T-cell (primary cell): ENCODE measurements at regions of chr11 and their contacts with region 1.

Region 1: DNA sequence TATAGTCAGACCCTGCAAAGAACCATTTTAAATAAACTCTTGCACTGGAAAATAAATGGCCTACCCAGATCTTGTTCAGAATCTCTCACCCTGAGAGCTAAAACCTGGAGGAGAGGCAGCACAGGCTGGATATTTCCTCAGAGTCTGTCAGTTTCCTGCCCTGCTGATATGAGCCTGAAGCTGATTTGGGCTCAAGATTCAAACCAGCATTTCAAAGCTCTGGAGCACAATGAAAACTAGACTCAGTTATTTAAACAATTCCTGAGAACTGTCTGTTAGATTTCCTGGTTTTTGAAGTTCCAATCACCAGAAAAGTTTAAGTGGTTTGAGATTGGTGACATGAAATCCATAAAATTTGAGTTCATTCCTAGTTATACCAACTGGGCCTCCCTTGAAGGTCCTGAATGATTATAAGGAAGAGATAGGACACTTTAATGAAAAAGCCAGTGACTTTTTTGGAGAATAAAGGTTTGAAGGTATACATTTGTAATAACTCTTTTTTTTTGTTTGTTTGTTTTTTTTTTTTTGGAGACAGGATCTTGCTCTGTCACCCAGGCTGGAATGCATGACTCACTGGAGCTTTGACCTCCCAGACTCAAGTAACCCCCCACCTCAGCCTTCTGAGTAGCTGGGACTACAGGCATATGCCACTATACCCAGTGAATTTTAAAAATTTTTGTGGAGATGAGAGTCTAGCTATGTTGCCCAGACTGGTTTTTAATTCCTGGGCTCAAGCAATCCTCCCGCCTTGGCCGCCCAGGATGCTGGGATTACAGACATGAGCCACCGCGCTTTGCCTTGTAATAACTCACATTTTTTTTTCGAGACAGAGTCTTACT is 7.9 kb upstream of the ESAM start:
- DNase-seq: no peak
- ATAC-seq: no peak
- H3K4me3 ChIP-seq: no peak overlapping the region
- H3K4me3 Mint-ChIP-seq: no peak overlapping the region
- H3K27ac ChIP-seq: no peak overlapping the region
- H3K27ac Mint-ChIP-seq: no peak overlapping the region
- H3K4me1 ChIP-seq: no peaks in the 10 kb centered on the region
- H3K4me1 Mint-ChIP-seq: no peaks in the 10 kb centered on the region
- H3K27me3 ChIP-seq: no peaks in the 10 kb centered on the region
- H3K27me3 Mint-ChIP-seq: no peaks in the 10 kb centered on the region

Region 2: GRCh38 chr11:124633355-124633754 is 136.7 kb before region 1 on chr11:
- CTCF ChIA-PET with region 1: no interaction called
- POLR2A ChIA-PET with region 1: interaction called in 1 of 2 experiments, 11 read pairs
- DNase-seq: no peak
- ATAC-seq: no peak
- H3K4me3 ChIP-seq: no peak overlapping the region
- H3K4me3 Mint-ChIP-seq: no peak overlapping the region
- H3K27ac ChIP-seq: no peak overlapping the region
- H3K27ac Mint-ChIP-seq: no peak overlapping the region
- H3K4me1 ChIP-seq: no peaks in the 10 kb centered on the region
- H3K4me1 Mint-ChIP-seq: peaks cover 2 to 7% (median 3%) of the 10 kb centered on the region in 3 donors
- H3K27me3 ChIP-seq: no peaks in the 10 kb centered on the region
- H3K27me3 Mint-ChIP-seq: no peaks in the 10 kb centered on the region